ENCODE measurements at regions of chr15 and their contacts with region 1.

Region 1: DNA sequence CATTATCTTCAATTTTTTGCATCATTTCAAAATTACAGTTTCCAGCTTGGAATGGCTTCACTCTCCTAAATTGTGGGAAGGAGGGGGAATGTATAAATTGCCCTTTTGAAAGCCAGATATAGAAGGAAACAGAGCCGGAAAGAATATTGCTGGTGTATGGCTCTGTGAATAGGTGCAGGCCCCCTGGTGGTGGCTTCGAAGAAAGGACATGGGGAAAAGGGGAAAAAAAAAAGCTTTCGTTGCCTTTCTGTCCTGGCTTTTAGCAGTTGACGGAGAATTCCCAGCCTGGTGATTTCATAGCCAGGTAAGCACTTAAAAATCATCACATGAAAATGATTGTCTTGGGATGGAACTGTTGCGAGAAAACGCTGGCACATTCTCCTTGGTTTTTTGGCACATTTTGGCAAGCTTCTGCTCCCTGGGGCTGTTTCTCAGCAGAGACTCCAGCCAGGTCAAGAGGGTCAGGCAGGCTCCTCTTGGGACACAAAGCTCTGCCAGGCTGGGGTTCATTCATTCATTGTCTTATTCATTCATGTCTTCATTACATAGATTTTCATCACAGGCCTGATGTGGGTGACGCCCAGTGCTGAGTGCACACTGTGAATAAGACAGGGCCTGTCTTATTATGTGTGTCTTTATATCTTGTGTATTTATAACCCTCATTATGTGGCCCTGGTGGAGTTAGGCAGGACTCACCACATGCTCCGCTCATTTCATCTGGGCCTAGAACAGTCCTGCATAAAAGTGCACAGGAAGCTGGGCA is 300.0 kb upstream of the TPM1 start:
- DNase-seq: peak; percentile 68
- H3K4me3 ChIP-seq: no peak overlapping the region
- CTCF ChIP-seq: peak; percentile 76

Region 2: GRCh38 chr15:62389885-62390790 is 352.5 kb before region 1 on chr15:
- CTCF ChIA-PET with region 1: interaction called, 18 read pairs
- POLR2A ChIA-PET with region 1: interaction called, 3 read pairs
- DNase-seq: no peak
- H3K4me3 ChIP-seq: peak within 1 kb of the TSS; percentile 90
- CTCF ChIP-seq: no peak

Region 3: GRCh38 chr15:62584301-62585235 is 158.0 kb before region 1 on chr15:
- CTCF ChIA-PET with region 1: interaction called, 13 read pairs
- POLR2A ChIA-PET with region 1: no interaction called
- DNase-seq: no peak
- H3K4me3 ChIP-seq: no peak overlapping the region
- CTCF ChIP-seq: no peak

Region 4: DNA sequence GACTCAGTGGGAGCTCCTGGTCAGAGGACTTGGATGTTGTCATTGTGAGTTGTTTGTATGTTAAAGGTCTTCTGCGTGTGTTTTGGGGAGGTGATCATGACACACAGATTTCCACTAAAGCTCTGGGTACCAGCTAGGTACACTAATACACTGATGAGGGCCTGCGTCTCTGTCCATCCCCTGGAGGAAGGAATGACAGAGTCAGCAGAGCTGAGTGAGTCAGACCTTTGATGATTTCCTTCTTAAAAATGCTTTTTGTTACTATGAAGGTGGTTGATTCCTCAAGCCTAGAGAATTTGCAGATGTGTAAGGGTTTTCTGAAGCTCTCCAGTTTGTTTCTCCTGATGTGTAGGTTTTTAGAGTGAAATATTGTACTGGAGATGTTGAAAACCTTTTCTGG is 124.2 kb before region 1 on chr15:
- CTCF ChIA-PET with region 1: interaction called, 24 read pairs
- POLR2A ChIA-PET with region 1: no interaction called
- DNase-seq: peak; percentile 47
- H3K4me3 ChIP-seq: no peak overlapping the region
- CTCF ChIP-seq: peak; percentile 68

Region 5: DNA sequence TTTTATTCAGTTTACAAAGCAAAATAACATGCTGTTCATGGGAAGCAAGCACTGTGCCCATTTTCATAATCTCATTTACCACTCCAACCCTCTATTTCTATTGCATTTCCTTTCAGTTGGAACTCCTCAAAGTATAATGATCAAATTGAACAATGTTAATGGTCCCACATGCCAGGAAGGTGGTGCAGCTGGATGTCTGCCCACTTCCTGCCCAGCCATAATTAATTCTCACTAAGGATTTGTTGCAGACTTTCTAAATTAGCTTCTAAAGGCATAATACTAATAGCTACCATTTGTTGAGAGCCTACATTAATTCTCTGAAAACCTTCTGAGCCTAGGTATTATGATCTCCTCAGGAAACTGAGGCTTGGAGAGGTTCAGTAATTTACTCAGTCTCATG is 16.1 kb before region 1 on chr15:
- CTCF ChIA-PET with region 1: interaction called, 31 read pairs
- POLR2A ChIA-PET with region 1: no interaction called
- DNase-seq: no peak
- H3K4me3 ChIP-seq: no peak overlapping the region
- CTCF ChIP-seq: no peak

Region 6: DNA sequence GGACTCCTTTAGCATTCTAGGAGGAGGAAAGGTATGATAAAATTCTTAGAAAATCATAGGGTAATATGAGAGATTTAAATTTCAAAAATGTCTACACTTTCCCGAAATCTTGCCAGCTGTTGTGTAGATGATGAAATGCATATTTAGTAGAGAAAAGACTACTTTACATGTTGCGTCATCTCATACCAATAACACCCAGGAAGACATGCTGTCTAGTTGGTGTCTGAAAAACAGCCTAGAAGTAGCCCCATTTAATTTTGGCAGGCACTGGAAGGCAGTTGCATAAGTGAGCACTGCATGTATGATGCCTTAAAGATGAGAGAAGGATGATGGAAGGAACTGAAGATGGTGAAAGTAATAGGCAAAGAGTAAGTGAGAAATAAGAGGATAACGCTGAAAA is 10.5 kb before region 1 on chr15:
- CTCF ChIA-PET with region 1: interaction called, 31 read pairs
- POLR2A ChIA-PET with region 1: no interaction called
- DNase-seq: no peak
- H3K4me3 ChIP-seq: no peak overlapping the region
- CTCF ChIP-seq: no peak

Region 7: GRCh38 chr15:62758126-62758951 is 15.7 kb after region 1 on chr15:
- CTCF ChIA-PET with region 1: interaction called, 161 read pairs
- POLR2A ChIA-PET with region 1: interaction called, 3 read pairs
- DNase-seq: peak; percentile 91
- H3K4me3 ChIP-seq: peak overlapping the region; percentile 15; the same call in 1 of the 2 replicates
- CTCF ChIP-seq: no peak

Measured in AG04449 (cell line).